ENCODE measurements at regions of chr15 and their contacts with region 1.

Region 1: GRCh38 chr15:36911322-36911944 is 188.9 kb downstream of the MEIS2 start:
- DNase-seq: no peak
- H3K4me3 ChIP-seq: no peak overlapping the region
- H3K27ac ChIP-seq: peak overlapping the region in 1 of 59 donors; percentile 3
- H3K27me3 ChIP-seq: no peaks in the 10 kb centered on the region
- CTCF ChIP-seq: no peak

Region 2: GRCh38 chr15:36996538-36997181 is 85.2 kb after region 1 on chr15:
- intact Hi-C with region 1: loop called in 1 of 2 experiments (anchors 10 kb)
- DNase-seq: no peak
- H3K4me3 ChIP-seq: no peak overlapping the region
- H3K27ac ChIP-seq: no peak overlapping the region
- H3K27me3 ChIP-seq: no peaks in the 10 kb centered on the region
- CTCF ChIP-seq: no peak